SK-N-SH (cell line): ENCODE measurements at regions of chr12 and their contacts with region 1.

Region 1: DNA sequence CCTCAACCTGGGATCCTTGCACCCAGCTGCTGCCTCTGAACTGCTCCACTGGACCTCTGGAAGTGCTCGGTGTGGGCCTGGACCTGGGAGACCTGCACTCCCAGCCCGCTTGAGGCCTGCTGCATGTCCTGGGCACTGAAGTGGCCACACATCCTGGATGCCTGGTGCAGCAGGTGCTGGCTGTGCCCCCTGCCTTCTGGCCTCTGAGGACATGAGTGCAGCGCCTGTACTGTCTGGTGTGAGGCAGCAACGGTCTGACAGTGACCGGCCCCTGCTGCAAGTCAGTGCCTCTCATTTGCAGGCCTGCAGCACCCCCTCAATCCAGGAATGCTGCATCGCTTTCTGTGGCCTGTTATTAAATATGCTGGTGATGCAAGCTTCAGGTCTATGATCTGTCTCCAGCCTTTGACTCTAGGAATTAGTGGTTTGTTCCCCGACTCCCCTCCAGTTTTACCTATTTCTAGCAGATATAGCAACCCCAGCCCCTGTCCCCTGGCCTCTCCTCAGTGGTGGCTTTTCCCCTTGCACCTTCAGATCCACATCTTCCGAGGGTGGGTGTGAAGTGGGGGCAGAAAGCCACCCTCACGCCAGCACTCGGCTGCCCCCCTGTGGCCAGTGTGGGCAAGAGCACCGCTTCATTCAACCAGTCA is 3.6 kb downstream of the SMIM41 start:
- DNase-seq: peak; percentile 92
- H3K4me3 ChIP-seq: no peak overlapping the region; a peak in 1 of 4 replicates
- H3K27ac ChIP-seq: peak overlapping the region in 1 of 2 experiments; percentile 3; a peak in 1 of 4 replicates
- H3K4me1 ChIP-seq: peaks cover 0 to 28% of the 10 kb centered on the region in 2 experiments; a peak in 1 of 4 replicates
- H3K27me3 ChIP-seq: no peaks in the 10 kb centered on the region
- CTCF ChIP-seq: peak; percentile 99
- EP300 ChIP-seq: no peak
- RAD21 ChIP-seq: peak; percentile 80

Region 2: DNA sequence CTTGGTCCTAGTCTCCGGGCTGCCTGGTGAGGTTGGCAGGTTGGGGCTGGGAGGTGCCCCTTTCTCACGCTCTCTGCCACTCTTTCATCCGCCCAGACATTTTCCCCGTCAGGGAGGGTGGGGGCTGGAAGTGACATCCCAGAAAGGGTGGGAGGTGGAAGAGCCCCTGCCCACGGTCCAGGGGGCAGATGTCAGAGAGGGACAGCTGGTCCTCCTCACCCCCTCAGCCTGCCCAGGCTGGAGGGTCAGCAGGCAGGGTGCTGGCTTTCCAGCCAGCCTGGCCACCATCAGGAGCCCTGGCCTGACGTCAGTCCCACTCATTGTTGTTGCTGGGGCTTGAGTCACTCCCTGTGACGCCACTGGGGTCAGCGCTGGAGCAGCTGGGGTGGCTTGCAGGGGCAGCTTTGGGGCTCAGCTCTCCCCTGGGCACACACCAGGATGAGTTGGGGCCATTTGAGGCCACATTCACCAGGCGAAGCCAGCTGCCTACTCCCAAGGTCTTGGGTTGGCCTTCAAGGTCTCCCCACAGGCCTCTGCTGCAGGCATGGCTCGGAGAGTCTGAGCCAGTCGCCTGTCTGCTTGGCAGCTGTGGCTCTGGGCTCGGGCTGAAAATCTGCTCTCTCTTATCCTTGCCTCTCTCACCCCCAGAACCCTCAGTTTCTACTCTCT is 19.0 kb before region 1 on chr12:
- CTCF ChIA-PET with region 1: interaction called, 12 read pairs
- POLR2A ChIA-PET with region 1: interaction called, 5 read pairs
- DNase-seq: no peak
- H3K4me3 ChIP-seq: no peak overlapping the region
- H3K27ac ChIP-seq: no peak overlapping the region; a peak in 1 of 4 replicates
- H3K4me1 ChIP-seq: peaks cover 0 to 26% of the 10 kb centered on the region in 2 experiments; a peak in 1 of 4 replicates
- H3K27me3 ChIP-seq: no peaks in the 10 kb centered on the region
- CTCF ChIP-seq: no peak
- EP300 ChIP-seq: no peak
- RAD21 ChIP-seq: no peak

Region 3: GRCh38 chr12:52203075-52203921 is 120.2 kb after region 1 on chr12:
- CTCF ChIA-PET with region 1: no interaction called
- POLR2A ChIA-PET with region 1: no interaction called
- DNase-seq: peak; percentile 63
- H3K4me3 ChIP-seq: peak overlapping the region in 1 of 2 experiments; percentile 4; a peak in 1 of 4 replicates
- H3K27ac ChIP-seq: peak overlapping the region; percentile 49 to 100
- H3K4me1 ChIP-seq: peaks cover 34 to 84% of the 10 kb centered on the region in 2 experiments
- H3K27me3 ChIP-seq: no peaks in the 10 kb centered on the region
- CTCF ChIP-seq: no peak
- EP300 ChIP-seq: peak in 1 of 2 experiments; percentile 54; a peak in 1 of 4 replicates
- RAD21 ChIP-seq: no peak